Psoas muscle (tissue), 8 donors: ENCODE measurements at regions of chr16 and their contacts with region 1.

Region 1: DNA sequence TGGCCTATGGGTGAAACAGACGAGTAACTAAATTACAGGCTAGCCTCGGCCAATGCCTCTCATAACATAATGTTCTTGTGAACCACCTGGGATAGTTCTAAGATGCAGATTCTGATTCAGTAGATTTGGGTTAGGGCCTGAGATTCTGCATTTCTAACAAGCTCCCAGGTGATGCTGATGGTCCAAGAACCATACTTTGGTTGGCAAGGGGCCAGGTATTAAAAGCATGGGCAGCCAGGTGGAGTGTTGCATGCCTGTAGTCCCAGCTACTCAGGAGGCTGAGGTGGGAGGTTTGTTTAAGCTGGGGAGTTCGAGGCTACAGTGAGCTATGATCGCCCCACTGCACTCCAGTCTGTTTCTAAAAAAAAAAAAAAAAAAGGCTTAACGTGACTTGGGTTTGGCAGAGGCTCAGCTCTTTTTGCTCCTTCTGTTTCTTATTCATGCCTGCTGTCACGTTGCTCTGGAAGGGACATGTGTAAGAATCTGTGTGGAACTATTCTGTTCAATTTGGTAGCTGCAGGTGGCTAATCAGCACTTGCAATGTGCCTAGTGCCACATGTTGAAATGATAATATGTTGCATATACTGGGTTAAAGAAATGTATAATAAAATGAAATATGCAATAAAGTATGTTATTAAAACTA is 21.0 kb upstream of the SYT17 start:
- DNase-seq: no peak
- ATAC-seq: no peak
- H3K4me3 ChIP-seq: no peak overlapping the region
- H3K27ac ChIP-seq: no peak overlapping the region
- H3K4me1 ChIP-seq: no peaks in the 10 kb centered on the region
- H3K27me3 ChIP-seq: no peaks in the 10 kb centered on the region
- CTCF ChIP-seq: no peak

Region 2: DNA sequence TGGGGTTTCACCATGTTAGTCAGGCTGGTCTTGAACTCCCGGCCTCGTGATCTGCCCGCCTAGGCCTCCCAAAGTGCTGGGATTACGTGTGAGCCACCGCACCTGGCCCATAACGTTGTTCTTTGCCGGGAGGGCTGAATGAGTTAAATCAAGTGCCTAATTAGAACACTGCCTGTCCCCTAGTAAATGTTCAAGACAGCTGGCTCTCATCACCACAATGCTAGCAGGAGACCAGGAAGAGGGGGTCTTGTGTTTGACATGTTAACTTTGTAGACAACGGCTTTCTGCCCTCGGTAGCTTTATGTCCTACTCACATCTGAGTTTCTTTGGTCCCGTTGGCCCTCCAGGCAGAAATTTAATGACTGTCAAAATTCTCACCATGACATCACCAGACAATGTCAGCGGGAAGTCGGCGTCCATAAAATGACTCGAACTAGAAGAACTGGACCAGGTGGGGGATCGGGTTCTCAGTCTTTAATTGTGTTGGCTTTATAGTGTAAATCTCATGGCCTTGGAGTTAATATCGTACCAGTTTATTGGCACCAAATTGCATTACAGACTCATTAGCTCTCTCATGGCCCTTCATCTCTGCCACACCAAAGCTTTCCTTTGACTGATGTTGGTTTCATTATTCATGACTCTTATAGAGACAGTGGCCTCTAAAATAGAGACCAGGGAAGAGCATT is 44.7 kb before region 1 on chr16:
- intact Hi-C with region 1: loop called in 1 of 2 experiments (anchors 5 kb)
- DNase-seq: no peak
- ATAC-seq: no peak
- H3K4me3 ChIP-seq: no peak overlapping the region
- H3K27ac ChIP-seq: no peak overlapping the region
- H3K4me1 ChIP-seq: no peaks in the 10 kb centered on the region
- H3K27me3 ChIP-seq: no peaks in the 10 kb centered on the region
- CTCF ChIP-seq: no peak